ENCODE measurements at regions of chr3 and their contacts with region 1.

Region 1: DNA sequence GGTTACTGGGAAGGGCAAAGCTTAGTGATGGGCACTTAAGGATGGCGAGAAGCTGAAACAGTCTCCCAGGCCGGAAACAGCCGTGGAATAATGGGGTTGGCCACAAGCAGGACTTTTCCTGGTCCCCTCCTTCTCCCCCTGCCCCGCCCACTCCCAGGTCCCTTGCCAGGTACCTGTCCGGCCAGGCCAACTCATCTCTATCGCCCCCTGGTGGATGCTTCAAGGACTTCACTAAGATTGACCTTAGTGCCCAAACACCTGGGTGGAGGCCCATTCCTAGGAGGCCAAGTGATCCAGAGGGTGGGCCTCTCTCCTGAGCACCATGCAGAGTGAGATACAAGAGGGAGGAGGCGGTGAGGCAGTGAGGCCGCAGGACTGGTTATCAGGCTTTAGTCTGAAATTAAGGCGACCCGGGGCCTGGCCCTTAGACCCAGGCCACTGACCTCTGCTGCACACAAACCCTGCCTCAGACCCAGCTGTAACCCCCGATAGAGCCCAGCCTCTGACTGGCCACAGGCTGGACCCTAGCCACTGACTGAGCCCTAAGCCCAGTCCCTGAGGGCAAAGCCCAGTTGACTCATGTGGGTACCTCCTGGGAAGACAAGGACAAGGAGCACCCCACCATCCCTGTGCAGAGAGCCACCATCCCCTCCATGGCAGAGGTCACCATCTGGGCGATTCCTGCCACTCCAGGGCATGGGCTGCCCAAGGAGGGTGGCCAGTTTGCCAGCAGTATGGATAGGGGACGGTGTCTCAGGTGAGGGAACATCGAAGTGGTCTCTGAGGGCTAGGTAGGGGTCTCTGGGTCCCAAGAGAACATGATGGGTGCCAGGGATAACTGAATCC is 37.6 kb downstream of the VIPR1 start:
- DNase-seq: peak; percentile 41
- ATAC-seq: peak; percentile 64
- H3K4me3 Mint-ChIP-seq: no peak overlapping the region
- H3K27ac Mint-ChIP-seq: no peak overlapping the region
- H3K4me1 Mint-ChIP-seq: no peaks in the 10 kb centered on the region
- H3K27me3 Mint-ChIP-seq: peaks cover 4% of the 10 kb centered on the region
- CTCF ChIP-seq: peak; percentile 47

Region 2: GRCh38 chr3:41893977-41894376 is 646.1 kb before region 1 on chr3:
- CTCF ChIA-PET with region 1: no interaction called
- POLR2A ChIA-PET with region 1: no interaction called
- intact Hi-C with region 1: loop called (anchors 2 kb)
- DNase-seq: no peak
- ATAC-seq: no peak
- H3K4me3 Mint-ChIP-seq: no peak overlapping the region
- H3K27ac Mint-ChIP-seq: no peak overlapping the region
- H3K4me1 Mint-ChIP-seq: no peaks in the 10 kb centered on the region
- H3K27me3 Mint-ChIP-seq: no peaks in the 10 kb centered on the region
- CTCF ChIP-seq: no peak

Region 3: GRCh38 chr3:42229942-42230688 is 310.0 kb before region 1 on chr3:
- CTCF ChIA-PET with region 1: interaction called, 3 read pairs
- POLR2A ChIA-PET with region 1: no interaction called
- intact Hi-C with region 1: loop called (anchors 1 kb)
- DNase-seq: no peak
- ATAC-seq: no peak
- H3K4me3 Mint-ChIP-seq: no peak overlapping the region
- H3K27ac Mint-ChIP-seq: no peak overlapping the region
- H3K4me1 Mint-ChIP-seq: no peaks in the 10 kb centered on the region
- H3K27me3 Mint-ChIP-seq: peaks cover 13% of the 10 kb centered on the region
- CTCF ChIP-seq: no peak

Region 4: DNA sequence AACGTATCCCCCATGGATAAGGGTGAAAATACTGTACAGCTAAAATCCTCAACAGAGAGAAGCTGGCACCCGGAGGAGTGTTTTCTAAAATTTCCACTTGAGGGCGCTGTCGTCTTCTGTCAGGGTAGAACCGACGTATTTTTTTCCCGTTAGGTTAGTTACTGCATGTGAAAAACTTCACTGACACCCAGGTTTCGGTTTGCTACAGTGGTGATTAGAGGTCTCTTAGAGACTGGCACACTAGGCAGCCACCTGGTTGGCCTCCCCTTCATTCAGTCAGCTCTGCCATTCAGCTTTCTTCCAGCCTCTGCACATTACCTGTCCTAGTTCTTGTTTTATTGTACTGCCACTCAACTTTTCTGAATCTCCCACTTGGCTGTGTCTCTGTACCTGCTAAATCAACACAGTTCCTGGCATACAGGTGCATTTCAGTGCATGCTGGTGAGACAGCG is 292.5 kb before region 1 on chr3:
- CTCF ChIA-PET with region 1: interaction called, 11 read pairs
- POLR2A ChIA-PET with region 1: no interaction called
- intact Hi-C with region 1: loop called (anchors 1 kb)
- DNase-seq: no peak
- ATAC-seq: peak; percentile 49
- H3K4me3 Mint-ChIP-seq: no peak overlapping the region
- H3K27ac Mint-ChIP-seq: no peak overlapping the region
- H3K4me1 Mint-ChIP-seq: peaks cover 2% of the 10 kb centered on the region
- H3K27me3 Mint-ChIP-seq: peaks cover 16% of the 10 kb centered on the region
- CTCF ChIP-seq: no peak

Region 5: GRCh38 chr3:42425736-42426407 is 114.2 kb before region 1 on chr3:
- CTCF ChIA-PET with region 1: interaction called, 3 read pairs
- POLR2A ChIA-PET with region 1: no interaction called
- intact Hi-C with region 1: loop called (anchors 5 kb)
- DNase-seq: no peak
- ATAC-seq: no peak
- H3K4me3 Mint-ChIP-seq: no peak overlapping the region
- H3K27ac Mint-ChIP-seq: no peak overlapping the region
- H3K4me1 Mint-ChIP-seq: no peaks in the 10 kb centered on the region
- H3K27me3 Mint-ChIP-seq: peaks cover 20% of the 10 kb centered on the region
- CTCF ChIP-seq: no peak

Region 6: DNA sequence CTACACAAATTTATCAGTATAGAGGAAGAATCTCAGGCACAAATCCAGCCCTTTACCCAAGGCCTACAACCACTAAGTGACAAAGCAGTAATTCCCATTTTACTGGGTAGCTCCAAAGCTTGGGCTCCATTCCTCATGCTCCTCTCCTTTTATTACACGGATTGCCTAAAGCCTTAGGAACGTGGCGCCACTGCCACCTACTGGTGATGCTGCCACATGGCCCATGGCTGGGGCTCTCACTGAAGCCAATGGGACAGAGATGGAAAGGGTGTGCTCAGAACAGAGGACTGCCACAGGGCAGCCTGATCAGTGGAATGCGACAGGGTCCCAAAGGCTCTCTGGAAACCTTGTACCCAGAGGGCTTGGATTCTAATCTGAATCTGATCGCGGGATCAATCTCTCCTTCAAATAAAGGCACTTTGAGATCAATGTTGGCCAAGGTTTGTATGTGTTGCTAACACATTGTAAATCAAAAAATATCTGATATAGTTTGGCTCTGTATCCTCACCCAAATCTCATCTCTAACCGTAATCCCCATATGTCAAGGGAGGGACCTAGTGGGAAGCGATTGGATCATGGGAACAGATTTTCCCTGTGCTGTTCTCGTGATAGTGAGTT is 96.2 kb before region 1 on chr3:
- CTCF ChIA-PET with region 1: no interaction called
- POLR2A ChIA-PET with region 1: no interaction called
- intact Hi-C with region 1: loop called (anchors 5 kb)
- DNase-seq: peak; percentile 64
- ATAC-seq: peak; percentile 79
- H3K4me3 Mint-ChIP-seq: no peak overlapping the region
- H3K27ac Mint-ChIP-seq: no peak overlapping the region
- H3K4me1 Mint-ChIP-seq: no peaks in the 10 kb centered on the region
- H3K27me3 Mint-ChIP-seq: peaks cover 12% of the 10 kb centered on the region
- CTCF ChIP-seq: peak; percentile 54